B cell (primary cell): ENCODE measurements at regions of chr3 and their contacts with region 1.

Region 1: GRCh38 chr3:32374788-32375595 is 16.7 kb upstream of the CMTM7 start:
- DNase-seq: peak; percentile 89
- ATAC-seq: peak; percentile 67
- H3K4me3 ChIP-seq: no peak overlapping the region
- H3K4me3 Mint-ChIP-seq: no peak overlapping the region
- H3K27ac ChIP-seq: no peak overlapping the region
- H3K27ac Mint-ChIP-seq: no peak overlapping the region
- H3K4me1 ChIP-seq: peaks cover 21 to 26% of the 10 kb centered on the region in 2 donors
- H3K4me1 Mint-ChIP-seq: peaks cover 26% of the 10 kb centered on the region
- H3K27me3 ChIP-seq: no peaks in the 10 kb centered on the region
- H3K27me3 Mint-ChIP-seq: peaks cover 4% of the 10 kb centered on the region
- CTCF ChIP-seq: peak; percentile 84

Region 2: DNA sequence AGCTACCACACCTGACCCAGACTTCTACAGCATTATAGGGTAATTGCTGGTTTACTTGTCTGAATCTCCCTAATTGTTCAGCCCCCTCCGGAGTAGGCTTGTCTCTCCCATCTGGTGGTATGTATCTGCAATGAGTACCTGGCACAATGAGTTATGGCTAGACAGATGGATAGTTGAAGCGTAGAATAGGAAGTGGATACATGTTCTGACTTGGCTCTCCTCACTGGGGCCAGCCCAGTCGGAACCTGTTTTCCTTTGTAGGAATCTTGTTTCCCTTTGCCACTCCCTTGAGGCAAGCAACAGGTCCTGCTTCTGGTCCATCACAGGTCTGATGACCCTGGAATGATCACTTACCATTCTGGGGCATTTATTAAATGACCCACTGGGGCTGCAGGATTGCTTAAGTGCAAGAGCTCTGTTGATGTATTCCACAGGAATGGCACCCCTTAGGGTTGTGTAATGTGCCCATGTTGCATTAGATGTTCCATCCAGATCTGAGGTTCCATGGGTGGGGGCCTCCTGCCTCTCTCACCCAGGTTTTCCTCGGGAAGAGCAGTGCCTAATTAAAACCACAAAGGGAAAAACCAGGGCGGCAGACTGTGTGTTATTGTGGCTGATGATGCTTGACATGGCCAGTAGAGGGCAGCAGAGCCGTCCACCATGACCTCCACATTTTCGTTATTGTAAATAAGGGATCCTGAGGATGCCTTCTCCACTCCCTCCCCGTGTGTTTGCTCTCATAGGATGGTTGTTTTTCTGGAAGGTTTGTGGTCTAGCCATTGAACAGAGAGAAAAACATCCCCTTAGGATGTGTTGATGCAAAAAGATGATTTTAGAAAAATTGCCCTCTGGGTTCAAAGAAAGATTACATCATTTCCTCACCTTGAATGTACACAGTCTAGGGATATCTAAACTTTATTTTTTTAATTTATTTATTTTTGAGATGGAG is 78.5 kb before region 1 on chr3:
- CTCF ChIA-PET with region 1: interaction called, 9 read pairs
- POLR2A ChIA-PET with region 1: no interaction called
- intact Hi-C with region 1: loop called (anchors 2 kb)
- DNase-seq: peak; percentile 74
- ATAC-seq: peak; percentile 64
- H3K4me3 ChIP-seq: no peak overlapping the region
- H3K4me3 Mint-ChIP-seq: no peak overlapping the region
- H3K27ac ChIP-seq: no peak overlapping the region
- H3K27ac Mint-ChIP-seq: no peak overlapping the region
- H3K4me1 ChIP-seq: peaks cover 6 to 7% of the 10 kb centered on the region in 2 donors
- H3K4me1 Mint-ChIP-seq: peaks cover 5% of the 10 kb centered on the region
- H3K27me3 ChIP-seq: no peaks in the 10 kb centered on the region
- H3K27me3 Mint-ChIP-seq: peaks cover 3% of the 10 kb centered on the region
- CTCF ChIP-seq: peak; percentile 94

Region 3: GRCh38 chr3:32401556-32402081 is 26.6 kb after region 1 on chr3:
- CTCF ChIA-PET with region 1: interaction called, 115 read pairs
- POLR2A ChIA-PET with region 1: no interaction called
- intact Hi-C with region 1: loop called (anchors 1 kb)
- DNase-seq: peak; percentile 80
- ATAC-seq: peak; percentile 70
- H3K4me3 ChIP-seq: peak overlapping the region; percentile 33 to 75 (median 55)
- H3K4me3 Mint-ChIP-seq: peak overlapping the region; percentile 88
- H3K27ac ChIP-seq: peak overlapping the region; percentile 88 to 94
- H3K27ac Mint-ChIP-seq: peak overlapping the region; percentile 96
- H3K4me1 ChIP-seq: peaks cover 41 to 58% of the 10 kb centered on the region in 2 donors
- H3K4me1 Mint-ChIP-seq: peaks cover 76% of the 10 kb centered on the region
- H3K27me3 ChIP-seq: no peaks in the 10 kb centered on the region
- H3K27me3 Mint-ChIP-seq: no peaks in the 10 kb centered on the region
- CTCF ChIP-seq: no peak

Region 4: DNA sequence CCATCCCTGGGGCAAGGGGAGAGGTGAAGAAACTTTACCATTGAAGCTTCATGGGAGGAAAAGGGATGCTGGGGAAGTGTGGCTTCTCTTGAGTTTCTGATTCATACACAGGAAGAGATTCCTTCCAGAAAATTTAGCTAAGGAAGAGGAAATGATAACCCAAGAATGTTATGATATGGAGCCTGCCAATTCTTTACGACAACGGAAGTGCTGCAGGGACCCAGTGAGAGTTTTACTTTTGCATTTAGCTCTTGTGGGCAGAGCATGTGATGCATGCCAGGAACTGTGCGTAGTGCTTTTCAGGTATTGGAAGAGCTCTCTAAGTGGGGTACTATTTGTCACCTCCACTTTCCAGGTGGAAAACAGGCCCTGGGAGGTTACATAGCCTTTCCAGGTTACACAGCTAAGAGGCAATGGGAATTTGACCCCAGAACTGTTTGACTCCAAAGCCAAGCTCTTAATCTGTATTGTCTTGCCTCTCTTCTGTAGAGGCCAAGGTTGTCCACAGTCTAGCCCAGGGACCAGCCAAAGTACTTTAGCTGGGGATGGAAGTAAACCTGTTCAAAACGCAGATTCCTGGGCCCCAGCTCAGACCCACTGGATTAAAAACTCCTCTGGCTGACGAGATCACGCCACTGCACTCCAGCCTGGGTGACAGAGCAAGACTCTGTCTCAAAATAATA is 39.7 kb after region 1 on chr3:
- CTCF ChIA-PET with region 1: interaction called, 8 read pairs
- POLR2A ChIA-PET with region 1: no interaction called
- intact Hi-C with region 1: loop called (anchors 5 kb)
- DNase-seq: peak; percentile 63
- ATAC-seq: peak; percentile 87
- H3K4me3 ChIP-seq: no peak overlapping the region
- H3K4me3 Mint-ChIP-seq: peak overlapping the region; percentile 48
- H3K27ac ChIP-seq: peak overlapping the region; percentile 71 to 73
- H3K27ac Mint-ChIP-seq: peak overlapping the region; percentile 88
- H3K4me1 ChIP-seq: peaks cover 31 to 33% of the 10 kb centered on the region in 2 donors
- H3K4me1 Mint-ChIP-seq: peaks cover 61% of the 10 kb centered on the region
- H3K27me3 ChIP-seq: no peaks in the 10 kb centered on the region
- H3K27me3 Mint-ChIP-seq: no peaks in the 10 kb centered on the region
- CTCF ChIP-seq: no peak

Region 5: DNA sequence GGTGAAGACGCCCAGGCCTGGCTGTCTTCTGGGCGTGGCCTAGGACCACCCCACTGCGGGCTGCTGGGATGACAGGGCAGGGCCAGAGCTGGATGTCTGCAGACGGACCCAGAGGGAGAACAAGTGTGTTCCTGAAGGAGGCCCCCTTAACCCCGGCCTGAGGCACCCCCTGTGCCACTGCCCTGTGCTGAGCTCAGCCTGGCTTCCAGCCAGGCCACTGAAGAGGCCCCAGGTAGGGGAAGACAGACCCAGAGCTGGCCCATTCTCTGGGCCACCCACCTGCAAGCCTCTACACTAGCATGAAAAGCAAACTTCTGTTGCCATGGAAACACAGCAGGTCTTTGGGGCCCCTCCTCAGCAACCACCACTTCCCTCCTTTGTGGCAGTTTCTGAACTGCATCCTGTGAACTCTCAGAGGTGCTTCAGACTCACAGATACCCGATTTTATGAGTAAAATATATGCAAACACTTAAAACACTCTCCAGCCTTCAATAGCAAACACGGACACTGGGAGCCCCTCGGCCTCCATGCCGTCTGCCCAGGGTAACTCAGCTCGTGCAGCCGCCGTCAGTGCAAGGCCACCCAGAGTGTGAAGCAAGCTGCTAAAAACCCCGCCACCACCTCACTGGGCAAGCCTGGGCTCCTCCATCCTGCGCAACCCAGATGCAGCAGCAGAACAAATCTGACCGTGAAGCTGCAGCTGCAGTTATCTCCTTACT is 85.2 kb after region 1 on chr3:
- CTCF ChIA-PET with region 1: interaction called, 33 read pairs
- POLR2A ChIA-PET with region 1: no interaction called
- intact Hi-C with region 1: no loop called
- DNase-seq: peak; percentile 94
- ATAC-seq: peak; percentile 73
- H3K4me3 ChIP-seq: peak overlapping the region in 3 of 5 experiments; percentile 29 to 39 (median 32)
- H3K4me3 Mint-ChIP-seq: peak overlapping the region; percentile 82
- H3K27ac ChIP-seq: peak overlapping the region; percentile 85 to 94
- H3K27ac Mint-ChIP-seq: peak overlapping the region; percentile 95
- H3K4me1 ChIP-seq: peaks cover 55 to 69% of the 10 kb centered on the region in 2 donors
- H3K4me1 Mint-ChIP-seq: peaks cover 48% of the 10 kb centered on the region
- H3K27me3 ChIP-seq: no peaks in the 10 kb centered on the region
- H3K27me3 Mint-ChIP-seq: no peaks in the 10 kb centered on the region
- CTCF ChIP-seq: no peak